ENCODE measurements at regions of chr5 and their contacts with region 1.

Region 1: GRCh38 chr5:6632917-6633468 is at the starts of genes NSUN2 and SRD5A1:
- DNase-seq: peak; percentile 93
- H3K4me3 ChIP-seq: peak within 1 kb of the TSS; percentile 99
- H3K27ac ChIP-seq: peak within 1 kb of the TSS; percentile 100
- H3K4me1 ChIP-seq: peaks cover 7% of the 10 kb centered on the region
- H3K27me3 ChIP-seq: no peaks in the 10 kb centered on the region
- CTCF ChIP-seq: no peak
- total RNA-seq, gene NSUN2: 102 and 111 TPM in 2 replicates
- total RNA-seq, gene SRD5A1: 32.0 and 32.4 TPM in 2 replicates

Region 2: GRCh38 chr5:6712577-6713275 is 79.7 kb after region 1 on chr5:
- CTCF ChIA-PET with region 1: no interaction called
- POLR2A ChIA-PET with region 1: no interaction called
- intact Hi-C with region 1: loop called (anchors 1 kb)
- DNase-seq: peak; percentile 98
- H3K4me3 ChIP-seq: peak overlapping the region; percentile 80
- H3K27ac ChIP-seq: peak overlapping the region; percentile 94
- H3K4me1 ChIP-seq: peaks cover 8% of the 10 kb centered on the region
- H3K27me3 ChIP-seq: no peaks in the 10 kb centered on the region
- CTCF ChIP-seq: no peak

Region 3: GRCh38 chr5:6723122-6723815 is 90.3 kb after region 1 on chr5:
- CTCF ChIA-PET with region 1: no interaction called
- POLR2A ChIA-PET with region 1: no interaction called
- intact Hi-C with region 1: no loop called
- DNase-seq: no peak
- H3K4me3 ChIP-seq: no peak overlapping the region
- H3K27ac ChIP-seq: no peak overlapping the region
- H3K4me1 ChIP-seq: peaks cover 30% of the 10 kb centered on the region
- H3K27me3 ChIP-seq: no peaks in the 10 kb centered on the region
- CTCF ChIP-seq: no peak

Measured in A673 (cell line).